AG04449 (cell line): ENCODE measurements at regions of chr1 and their contacts with region 1.

Region 1: DNA sequence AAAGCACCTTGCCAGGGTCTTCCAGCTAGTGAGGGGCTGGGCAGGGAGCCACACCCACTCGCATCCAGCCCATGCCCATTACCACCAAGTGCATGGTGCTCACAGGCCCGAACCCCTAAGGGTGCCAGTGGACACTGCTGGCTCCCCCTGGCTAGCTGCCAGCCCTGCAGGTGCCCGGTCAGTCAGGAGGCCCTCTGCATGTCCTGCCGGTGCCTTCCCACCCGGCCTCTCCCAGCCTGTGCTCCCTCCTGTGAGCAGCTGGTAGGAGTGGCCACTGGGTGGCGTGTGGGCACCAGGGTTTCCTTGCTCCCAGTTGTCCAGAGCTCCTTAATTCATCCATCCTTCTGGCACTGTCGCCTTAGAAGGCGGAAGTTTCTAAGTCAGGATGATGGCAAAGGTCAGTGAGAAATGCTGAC is 33.4 kb downstream of the QSOX1 start:
- DNase-seq: no peak
- H3K4me3 ChIP-seq: no peak overlapping the region
- CTCF ChIP-seq: peak; percentile 86

Region 2: DNA sequence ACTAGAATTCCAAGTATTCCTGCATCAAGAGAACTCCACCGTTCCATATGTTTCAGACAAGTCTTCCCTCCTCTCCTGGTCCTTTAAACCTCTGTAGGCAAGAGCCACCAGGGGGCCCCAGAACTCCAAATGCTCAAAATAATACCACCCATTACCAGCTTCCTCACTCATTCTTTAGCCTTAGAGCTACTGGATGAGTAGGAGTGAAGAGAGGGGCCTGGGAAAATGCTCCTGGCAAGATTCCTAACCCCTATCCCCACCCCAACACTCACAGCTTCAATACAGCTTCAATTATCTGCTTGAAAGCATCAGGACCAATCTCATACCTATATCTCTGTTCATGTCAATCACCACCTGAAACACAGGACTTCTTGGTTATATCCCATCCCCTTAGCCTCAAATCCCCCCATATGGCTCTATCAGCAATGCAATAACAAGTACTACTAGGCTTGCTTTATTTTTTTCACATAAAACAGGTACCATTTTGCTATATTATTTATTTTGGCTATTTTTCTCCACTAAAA is 320.2 kb before region 1 on chr1:
- CTCF ChIA-PET with region 1: interaction called, 145 read pairs
- POLR2A ChIA-PET with region 1: no interaction called
- DNase-seq: no peak
- H3K4me3 ChIP-seq: no peak overlapping the region
- CTCF ChIP-seq: peak; percentile 64

Region 3: GRCh38 chr1:180131510-180131909 is 56.6 kb before region 1 on chr1:
- CTCF ChIA-PET with region 1: no interaction called
- POLR2A ChIA-PET with region 1: no interaction called
- DNase-seq: peak; percentile 92
- H3K4me3 ChIP-seq: no peak overlapping the region
- CTCF ChIP-seq: no peak

Region 4: GRCh38 chr1:180198196-180198595 is 10.1 kb after region 1 on chr1:
- CTCF ChIA-PET with region 1: interaction called, 25 read pairs
- POLR2A ChIA-PET with region 1: no interaction called
- DNase-seq: no peak
- H3K4me3 ChIP-seq: no peak overlapping the region
- CTCF ChIP-seq: no peak

Region 5: GRCh38 chr1:180203890-180204630 is 16.0 kb after region 1 on chr1:
- CTCF ChIA-PET with region 1: interaction called, 25 read pairs
- POLR2A ChIA-PET with region 1: no interaction called
- DNase-seq: no peak
- H3K4me3 ChIP-seq: no peak overlapping the region
- CTCF ChIP-seq: no peak

Region 6: DNA sequence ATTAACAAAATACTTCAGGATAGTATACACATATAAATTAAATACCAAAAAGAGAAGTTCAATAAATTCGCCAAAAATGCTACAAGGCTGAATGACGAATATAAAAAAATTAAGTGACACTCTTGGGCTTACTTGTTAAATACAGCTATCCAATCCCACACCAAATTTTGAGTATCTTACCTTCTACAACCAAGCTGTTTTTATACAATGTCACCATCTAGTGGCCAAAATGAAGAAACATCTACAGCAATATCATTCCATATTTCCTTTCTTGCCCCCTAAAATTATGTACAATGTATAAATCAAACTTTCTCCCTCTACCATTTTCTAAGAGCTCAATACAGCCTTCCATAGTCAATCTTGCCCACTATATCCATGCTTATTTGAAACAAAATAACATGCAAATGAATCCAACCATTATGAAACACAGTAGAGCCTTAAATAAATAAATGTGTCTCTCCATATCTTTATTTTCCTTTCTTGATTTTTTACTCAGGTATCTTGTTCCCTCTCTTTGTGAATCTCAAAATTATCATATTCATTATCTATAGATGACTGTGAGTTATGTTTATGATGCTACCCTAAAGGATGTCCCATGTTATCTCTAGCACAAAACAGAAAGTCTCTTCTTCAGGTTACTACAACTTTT is 228.0 kb after region 1 on chr1:
- CTCF ChIA-PET with region 1: interaction called, 67 read pairs
- POLR2A ChIA-PET with region 1: no interaction called
- DNase-seq: no peak
- H3K4me3 ChIP-seq: no peak overlapping the region
- CTCF ChIP-seq: peak; percentile 33

Region 7: DNA sequence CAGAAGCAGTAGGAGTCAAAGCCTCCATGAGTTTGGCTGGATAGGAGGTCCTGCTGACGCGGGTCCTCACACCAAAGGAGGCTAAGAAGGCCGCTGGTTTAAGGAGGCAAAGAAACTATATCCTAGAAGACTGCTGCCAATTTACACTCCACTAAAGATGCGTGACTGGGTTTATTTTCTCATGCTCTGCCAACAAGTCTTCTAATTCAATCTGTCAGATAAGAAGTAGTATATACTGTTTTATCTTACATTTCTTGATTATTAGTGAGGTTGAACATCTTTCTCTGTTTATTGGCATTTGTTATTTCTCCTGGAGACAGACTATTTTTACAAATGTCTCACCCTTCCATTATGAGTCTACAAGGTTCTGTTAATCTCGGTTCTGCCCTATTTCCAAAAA is 280.2 kb after region 1 on chr1:
- CTCF ChIA-PET with region 1: interaction called, 10 read pairs
- POLR2A ChIA-PET with region 1: no interaction called
- DNase-seq: no peak
- H3K4me3 ChIP-seq: no peak overlapping the region
- CTCF ChIP-seq: no peak